ENCODE measurements at regions of chr19 and their contacts with region 1.

Region 1: GRCh38 chr19:16216744-16217670 is 19.3 kb downstream of the AP1M1 start:
- DNase-seq: peak in 9 of 10 donors; percentile 26 to 76 (median 57)
- ATAC-seq: peak; percentile 72 to 81
- H3K4me3 Mint-ChIP-seq: peak overlapping the region; percentile 63 to 85 (median 82)
- H3K27ac Mint-ChIP-seq: peak overlapping the region; percentile 93 to 98 (median 96)
- H3K4me1 Mint-ChIP-seq: peaks cover 41 to 72% (median 68%) of the 10 kb centered on the region in 4 donors
- H3K27me3 Mint-ChIP-seq: no peaks in the 10 kb centered on the region

Region 2: GRCh38 chr19:16197622-16198369 is 19.2 kb before region 1 on chr19 and contains the start of gene AP1M1:
- POLR2A ChIA-PET with region 1: interaction called, 21 read pairs
- DNase-seq: peak; percentile 94 to 99 (median 97)
- ATAC-seq: peak; percentile 78 to 83
- H3K4me3 Mint-ChIP-seq: peak within 1 kb of the TSS; percentile 75 to 95 (median 90)
- H3K27ac Mint-ChIP-seq: peak within 1 kb of the TSS; percentile 94 to 99 (median 98)
- H3K4me1 Mint-ChIP-seq: peaks cover 32 to 59% (median 48%) of the 10 kb centered on the region in 4 donors
- H3K27me3 Mint-ChIP-seq: no peaks in the 10 kb centered on the region
- polyA plus RNA-seq, gene AP1M1: 195 to 288 (median 241) TPM

Region 3: DNA sequence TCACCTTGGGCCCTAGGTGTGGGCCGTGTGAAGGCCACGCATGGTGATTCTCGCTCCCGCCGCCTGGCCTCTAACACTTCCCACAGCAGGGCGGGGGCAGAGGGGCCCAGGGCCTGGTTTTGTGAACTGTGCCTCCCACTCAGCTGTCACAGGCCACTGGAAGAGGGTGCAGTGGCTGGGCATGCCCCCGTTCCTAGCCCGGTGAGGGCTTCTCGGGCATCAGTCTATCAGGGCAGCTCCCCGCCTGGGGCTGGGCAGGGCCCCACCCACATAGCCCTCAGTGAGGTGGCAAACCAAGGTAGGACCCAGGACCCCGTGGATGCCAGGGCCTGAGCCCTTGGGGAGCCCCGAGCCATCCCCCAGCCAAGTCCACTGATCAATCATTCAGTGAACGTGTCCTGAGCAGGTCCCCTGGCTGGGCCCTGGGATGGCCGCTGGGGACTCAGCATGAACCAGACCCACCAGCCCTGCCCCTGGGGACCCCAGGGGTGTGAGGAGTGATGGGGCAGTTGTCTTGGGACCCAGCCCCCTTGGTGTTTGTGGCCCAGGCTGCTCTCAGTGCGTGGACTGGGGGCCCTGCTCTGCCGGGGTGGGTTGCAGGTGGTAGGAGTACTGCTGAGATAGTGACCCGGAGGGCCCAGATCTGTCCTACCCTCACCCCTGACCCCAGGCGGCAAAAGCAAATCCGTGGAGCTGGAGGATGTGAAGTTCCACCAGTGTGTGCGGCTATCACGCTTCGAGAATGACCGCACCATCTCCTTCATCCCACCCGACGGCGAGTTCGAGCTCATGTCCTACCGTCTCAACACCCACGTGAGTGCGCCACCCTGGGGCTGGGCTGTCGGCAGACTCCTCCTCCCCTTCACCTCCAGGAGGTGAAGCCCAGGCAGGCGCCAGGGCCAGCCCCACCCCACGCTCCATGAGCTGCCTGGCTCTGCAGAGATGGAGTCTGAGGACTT is 10.2 kb after region 1 on chr19:
- POLR2A ChIA-PET with region 1: interaction called, 51 read pairs
- DNase-seq: no peak
- ATAC-seq: no peak
- H3K4me3 Mint-ChIP-seq: no peak overlapping the region
- H3K27ac Mint-ChIP-seq: peak overlapping the region in 1 of 10 donors; percentile 11
- H3K4me1 Mint-ChIP-seq: peaks cover 0 to 14% (median 5%) of the 10 kb centered on the region in 4 donors
- H3K27me3 Mint-ChIP-seq: no peaks in the 10 kb centered on the region

Region 4: DNA sequence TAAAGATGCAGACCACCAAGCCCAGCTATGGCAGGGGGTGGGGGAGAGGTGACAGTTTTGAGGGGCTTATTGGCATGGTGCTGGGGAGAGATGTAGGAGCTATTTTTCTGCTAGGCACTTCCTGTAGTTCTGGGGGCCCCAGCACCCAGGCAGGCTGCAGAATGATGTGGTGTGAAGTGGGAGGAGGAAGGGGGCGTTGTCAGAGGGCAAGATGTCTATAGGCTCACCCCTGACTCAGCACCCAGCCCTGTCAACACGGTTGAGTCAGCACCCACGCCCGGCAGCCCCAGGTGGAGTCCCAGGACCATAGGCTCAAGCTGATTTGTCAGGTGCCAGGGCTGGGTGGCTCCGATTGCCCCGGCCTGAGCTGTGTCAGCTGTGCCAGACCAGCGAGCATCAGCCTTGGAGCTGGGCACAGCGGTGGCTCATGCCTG is 113.4 kb after region 1 on chr19:
- POLR2A ChIA-PET with region 1: interaction called, 14 read pairs
- DNase-seq: peak; percentile 77 to 96 (median 92)
- ATAC-seq: peak; percentile 59 to 60
- H3K4me3 Mint-ChIP-seq: peak overlapping the region; percentile 71 to 100 (median 99)
- H3K27ac Mint-ChIP-seq: peak overlapping the region; percentile 91 to 100 (median 100)
- H3K4me1 Mint-ChIP-seq: peaks cover 29 to 69% (median 50%) of the 10 kb centered on the region in 4 donors
- H3K27me3 Mint-ChIP-seq: peaks cover 0 to 11% (median 0%) of the 10 kb centered on the region in 5 donors